ENCODE measurements at regions of chr17 and their contacts with region 1.

Region 1: DNA sequence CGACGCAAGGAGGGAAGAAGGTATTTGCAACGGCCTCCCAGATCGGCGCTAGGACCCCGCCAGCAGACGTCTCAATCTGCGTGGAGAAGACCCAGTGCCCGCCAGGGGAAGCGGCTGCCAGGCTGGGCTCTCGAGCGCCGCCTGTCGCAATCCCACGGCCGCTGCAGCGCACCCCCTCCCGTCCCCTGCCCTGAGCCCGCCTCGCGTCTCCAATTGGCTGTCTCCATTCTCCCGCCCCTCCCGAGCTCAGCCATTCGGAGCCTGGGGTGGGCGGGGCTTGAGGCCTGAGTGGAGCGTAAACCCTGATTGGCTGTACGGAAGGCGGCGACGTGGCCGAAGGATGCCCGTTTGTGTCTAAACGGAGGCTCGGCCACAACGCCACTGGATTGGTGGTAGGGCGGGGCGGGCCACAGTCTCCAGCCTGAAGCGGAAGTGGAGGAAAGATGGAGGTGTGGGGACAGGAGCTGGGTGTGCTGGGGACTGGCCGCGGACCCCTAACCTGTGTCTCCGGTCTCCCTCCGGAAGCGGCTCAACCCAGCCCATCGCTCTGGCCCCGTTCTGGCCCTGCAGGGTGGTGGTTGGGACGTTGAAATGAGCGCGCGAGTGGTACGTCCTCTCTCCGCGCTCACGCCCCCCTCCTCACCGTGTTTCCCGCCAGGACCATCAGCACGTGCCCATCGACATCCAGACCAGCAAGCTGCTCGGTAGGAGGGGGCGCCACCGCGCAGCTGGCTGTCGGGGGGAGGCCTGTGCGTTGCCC is at the start of gene CDK5RAP3:
- DNase-seq: peak; percentile 89
- H3K4me3 ChIP-seq: peak within 1 kb of the TSS; percentile 98
- CTCF ChIP-seq: peak; percentile 100

Region 2: DNA sequence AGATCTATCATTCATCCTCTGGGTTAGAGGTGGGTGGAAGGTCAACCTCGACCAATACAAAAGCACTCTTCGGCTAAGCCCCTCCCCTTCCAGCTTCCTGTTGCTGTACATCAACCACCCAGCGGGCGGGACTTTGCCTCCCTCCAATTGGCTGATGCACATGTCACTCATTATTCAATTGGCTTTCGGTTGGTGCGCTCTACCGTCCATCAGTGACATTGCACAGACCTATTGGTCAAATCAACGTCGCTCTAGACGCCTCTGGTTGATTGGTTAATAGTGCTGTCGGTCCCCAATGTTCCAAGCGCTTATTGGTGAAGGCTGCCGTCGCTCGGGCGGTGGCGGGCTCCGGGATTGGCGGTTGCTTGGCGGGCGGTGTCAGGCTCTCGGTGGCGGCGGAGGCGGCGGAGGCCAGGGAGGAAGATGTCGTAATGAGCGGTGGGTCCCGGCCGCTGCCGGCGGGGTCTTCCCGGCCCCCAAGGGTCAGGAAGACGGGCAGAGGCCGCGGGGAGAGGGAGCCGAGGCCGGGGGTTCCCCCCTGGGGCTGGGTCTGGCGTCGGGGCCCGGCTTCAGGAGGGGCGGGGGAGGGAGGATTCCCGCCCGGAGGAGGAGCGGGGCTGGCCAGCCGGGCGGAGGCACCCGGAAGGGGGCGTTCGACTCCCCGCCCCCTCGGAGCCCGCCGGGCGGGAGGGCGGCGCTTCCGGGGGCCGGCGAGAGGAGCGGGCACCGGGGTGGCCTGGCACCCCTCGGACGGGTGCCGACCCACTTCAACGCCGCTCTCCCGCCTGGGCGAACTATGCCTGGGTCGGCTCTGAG is 74.8 kb before region 1 on chr17 and contains the start of gene SP2:
- CTCF ChIA-PET with region 1: interaction called, 10 read pairs
- POLR2A ChIA-PET with region 1: interaction called, 5 read pairs
- DNase-seq: peak; percentile 100
- H3K4me3 ChIP-seq: peak within 1 kb of the TSS; percentile 96
- CTCF ChIP-seq: peak; percentile 10

Region 3: DNA sequence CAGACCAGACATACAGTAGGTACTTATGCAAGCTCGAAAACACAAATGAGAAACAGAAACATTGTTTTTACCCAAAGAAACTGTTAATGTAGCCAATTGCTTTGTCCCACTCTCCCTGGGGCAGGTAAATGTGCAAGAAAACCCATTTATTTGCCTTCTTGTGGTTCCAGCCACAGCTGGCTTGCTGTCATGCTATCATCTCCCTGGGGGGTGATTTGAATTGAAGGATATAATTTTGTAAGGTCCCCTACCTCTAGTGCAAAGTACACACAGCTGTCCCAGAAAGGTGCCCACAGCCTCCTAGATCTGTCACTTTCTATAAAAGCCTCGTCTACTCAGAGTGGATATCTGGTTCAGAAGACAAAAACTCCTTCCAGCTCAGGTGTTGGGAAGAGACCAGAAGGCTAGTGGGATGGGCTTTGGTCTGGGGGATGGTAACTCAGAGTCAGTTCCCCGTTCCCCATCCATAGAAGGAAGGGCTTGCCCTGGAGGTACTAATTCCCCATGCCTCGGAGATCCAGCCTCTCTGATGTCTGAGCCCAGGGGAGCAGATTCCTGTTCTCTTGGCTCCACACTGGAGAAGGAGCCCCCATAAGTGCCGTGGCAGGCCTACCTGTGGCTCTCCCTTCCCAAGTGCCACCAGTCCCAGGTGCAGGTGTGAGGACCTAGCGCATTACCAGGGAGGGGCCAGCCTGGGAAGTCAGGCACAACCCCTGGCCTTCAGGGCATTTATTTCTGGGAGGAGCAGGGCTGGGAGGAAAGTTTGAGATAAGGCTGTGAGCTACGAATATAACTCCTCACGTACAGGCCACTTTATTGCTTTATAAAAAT is 10.8 kb before region 1 on chr17:
- CTCF ChIA-PET with region 1: interaction called, 775 read pairs
- POLR2A ChIA-PET with region 1: interaction called, 3 read pairs
- DNase-seq: no peak
- H3K4me3 ChIP-seq: no peak overlapping the region
- CTCF ChIP-seq: no peak

Region 4: DNA sequence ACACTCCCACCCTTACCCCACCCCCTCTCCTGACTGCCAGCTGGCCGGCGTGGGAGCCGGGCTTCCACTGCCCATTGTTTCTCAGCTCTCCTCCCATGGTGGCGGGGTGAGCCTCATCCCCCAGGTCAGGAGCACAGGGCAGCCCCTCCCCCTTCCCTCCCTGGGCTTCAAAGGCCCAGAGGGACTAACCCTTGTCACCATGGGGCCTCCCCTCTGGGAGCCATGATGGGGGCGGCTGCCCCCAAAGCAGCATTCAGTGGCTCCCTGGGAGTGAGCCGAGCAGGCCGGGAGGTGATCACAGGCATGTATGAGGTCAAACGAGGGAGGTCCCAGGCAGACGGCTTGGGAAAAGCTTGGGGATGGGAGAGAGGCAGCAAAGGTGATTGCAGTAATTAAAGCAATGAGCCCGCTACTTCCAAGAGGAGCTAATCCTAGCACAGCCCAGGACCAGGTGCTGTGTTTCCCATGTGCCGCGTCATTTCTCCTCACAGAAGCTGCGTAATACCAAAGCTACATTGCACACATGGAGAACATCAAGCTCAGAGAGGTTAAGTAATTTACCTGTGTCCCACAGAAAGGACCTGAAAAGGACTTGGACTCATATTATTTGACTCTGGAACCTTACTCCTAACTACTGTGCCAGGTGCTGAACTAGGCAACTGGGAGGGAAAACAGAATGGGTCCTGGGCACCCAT is 24.5 kb after region 1 on chr17:
- CTCF ChIA-PET with region 1: interaction called, 42 read pairs
- POLR2A ChIA-PET with region 1: no interaction called
- DNase-seq: no peak
- H3K4me3 ChIP-seq: no peak overlapping the region
- CTCF ChIP-seq: no peak

Region 5: DNA sequence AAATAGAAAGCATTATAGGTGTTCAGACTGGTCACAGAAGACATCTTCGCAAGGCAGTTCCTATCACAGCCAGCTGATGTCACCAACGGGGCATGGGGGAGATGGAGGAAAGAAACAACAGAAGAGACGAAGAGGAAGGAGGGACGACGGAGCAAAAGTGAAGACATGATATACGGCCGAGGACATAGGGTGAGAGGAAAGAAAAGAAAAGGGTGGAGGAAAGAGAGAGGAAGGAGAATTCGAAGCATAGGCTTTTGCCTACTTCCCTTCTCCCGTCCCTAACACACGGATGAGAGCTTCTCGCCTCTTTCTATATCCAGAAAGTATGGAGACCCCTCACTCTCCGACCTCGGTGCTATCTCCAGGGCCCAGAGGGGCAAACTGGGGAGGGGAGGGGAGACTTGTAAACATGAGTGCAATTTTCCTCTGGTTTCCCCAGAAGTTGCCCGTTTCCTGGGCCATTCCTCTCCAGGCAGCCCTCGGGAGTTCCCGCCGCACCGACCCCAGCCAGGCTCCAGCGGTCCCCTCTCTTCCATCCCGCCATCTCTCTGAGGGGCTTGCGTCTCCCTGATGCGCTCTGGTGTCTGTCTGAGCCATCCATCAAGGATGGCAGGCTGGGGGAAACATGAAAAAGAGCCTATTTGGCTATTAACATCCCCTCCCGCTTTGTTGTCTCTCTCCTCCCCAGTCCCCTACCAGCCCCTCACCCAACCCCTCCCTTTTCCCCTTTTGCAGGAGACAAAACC is 40.7 kb after region 1 on chr17:
- CTCF ChIA-PET with region 1: interaction called, 600 read pairs
- POLR2A ChIA-PET with region 1: no interaction called
- DNase-seq: no peak
- H3K4me3 ChIP-seq: peak overlapping the region; percentile 54
- CTCF ChIP-seq: peak; percentile 68

Measured in AG04449 (cell line).